Pancreas (tissue), 10 donors: ENCODE measurements at regions of chr1 and their contacts with region 1.

Region 1: DNA sequence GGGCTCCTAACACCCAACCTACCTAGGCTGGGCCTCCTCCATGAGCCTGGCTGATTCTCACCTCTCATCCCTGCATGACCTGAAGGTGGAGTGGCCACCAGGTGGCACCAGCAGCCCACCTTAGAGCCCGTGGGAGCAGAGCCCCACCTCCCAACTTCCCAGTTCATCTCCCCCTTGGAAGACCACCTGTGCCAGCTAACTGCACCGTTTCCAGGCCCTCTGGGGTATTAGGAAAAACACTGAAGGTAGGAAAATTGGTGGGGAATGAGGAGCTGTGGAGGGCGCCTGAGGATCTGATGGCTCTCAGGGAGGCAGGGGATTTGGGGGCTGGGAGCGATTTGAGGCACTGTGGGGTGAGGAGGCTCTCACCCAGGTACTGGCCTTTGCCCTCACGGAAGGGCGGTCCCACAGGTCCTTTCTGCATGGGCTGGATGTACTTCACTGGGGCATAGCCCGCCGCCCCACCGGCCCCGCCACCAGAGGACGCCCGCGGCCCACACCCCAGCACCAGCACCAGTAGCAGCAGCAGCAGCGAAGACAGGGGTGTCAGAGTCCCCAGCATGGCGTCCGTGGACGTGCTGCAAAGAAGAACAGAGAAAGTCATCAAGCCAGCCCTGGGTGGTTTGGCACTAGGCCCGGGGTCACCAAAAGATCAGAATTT is 11.1 kb downstream of the ADPRS start:
- DNase-seq: peak; percentile 61 to 91 (median 84)
- ATAC-seq: peak; percentile 81 to 96 (median 93)
- H3K4me3 ChIP-seq: no peak overlapping the region
- H3K27ac ChIP-seq: no peak overlapping the region
- H3K4me1 ChIP-seq: no peaks in the 10 kb centered on the region
- H3K27me3 ChIP-seq: no peaks in the 10 kb centered on the region
- CTCF ChIP-seq: peak; percentile 59 to 81 (median 76)

Region 2: GRCh38 chr1:36187800-36188593 is 88.2 kb after region 1 on chr1:
- intact Hi-C with region 1: loop called in 2 of 3 experiments (anchors 5 to 10 kb)
- DNase-seq: peak; percentile 77 to 91 (median 82)
- ATAC-seq: peak; percentile 96 to 99 (median 99)
- H3K4me3 ChIP-seq: no peak overlapping the region
- H3K27ac ChIP-seq: peak overlapping the region in 3 of 4 donors; percentile 44 to 59 (median 48)
- H3K4me1 ChIP-seq: no peaks in the 10 kb centered on the region
- H3K27me3 ChIP-seq: no peaks in the 10 kb centered on the region
- CTCF ChIP-seq: peak; percentile 66 to 86 (median 74)

Region 3: DNA sequence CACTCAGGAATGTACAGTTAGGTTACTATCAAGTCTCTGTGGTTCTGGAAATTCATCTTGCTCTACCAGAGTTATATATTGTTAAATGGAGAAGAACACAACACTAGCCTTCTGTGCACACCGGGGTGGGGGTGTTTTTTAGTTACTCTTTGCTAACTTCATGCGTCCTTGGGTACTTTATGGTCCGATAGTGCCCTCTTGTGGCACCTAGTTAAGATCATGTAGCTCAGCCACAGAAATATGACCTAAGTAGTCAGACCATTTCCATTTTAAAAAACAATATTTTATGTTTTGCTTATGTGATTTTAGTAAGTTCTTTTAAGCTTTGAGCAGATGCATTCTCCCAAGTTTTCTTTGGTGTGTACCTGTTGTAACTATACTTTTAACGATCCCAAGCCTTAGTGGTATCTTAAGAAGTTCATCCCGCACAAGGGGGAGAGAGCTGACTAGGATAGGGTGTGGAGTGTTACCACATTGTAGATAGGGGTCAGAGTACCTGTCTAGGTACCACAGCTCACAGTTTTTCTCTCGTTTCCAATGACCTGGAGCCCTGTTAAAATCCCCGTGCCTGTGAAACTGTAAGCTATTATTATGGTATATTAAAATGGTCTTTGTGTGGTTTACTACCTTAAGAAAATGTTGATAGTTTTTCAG is 185.8 kb after region 1 on chr1:
- intact Hi-C with region 1: loop called in 2 of 3 experiments (anchors 5 to 10 kb)
- DNase-seq: peak in 3 of 6 donors; percentile 60 to 68 (median 62)
- ATAC-seq: peak; percentile 87 to 95 (median 92)
- H3K4me3 ChIP-seq: no peak overlapping the region
- H3K27ac ChIP-seq: peak overlapping the region in 1 of 4 donors; percentile 25
- H3K4me1 ChIP-seq: no peaks in the 10 kb centered on the region
- H3K27me3 ChIP-seq: no peaks in the 10 kb centered on the region
- CTCF ChIP-seq: peak; percentile 44 to 64 (median 56)

Region 4: DNA sequence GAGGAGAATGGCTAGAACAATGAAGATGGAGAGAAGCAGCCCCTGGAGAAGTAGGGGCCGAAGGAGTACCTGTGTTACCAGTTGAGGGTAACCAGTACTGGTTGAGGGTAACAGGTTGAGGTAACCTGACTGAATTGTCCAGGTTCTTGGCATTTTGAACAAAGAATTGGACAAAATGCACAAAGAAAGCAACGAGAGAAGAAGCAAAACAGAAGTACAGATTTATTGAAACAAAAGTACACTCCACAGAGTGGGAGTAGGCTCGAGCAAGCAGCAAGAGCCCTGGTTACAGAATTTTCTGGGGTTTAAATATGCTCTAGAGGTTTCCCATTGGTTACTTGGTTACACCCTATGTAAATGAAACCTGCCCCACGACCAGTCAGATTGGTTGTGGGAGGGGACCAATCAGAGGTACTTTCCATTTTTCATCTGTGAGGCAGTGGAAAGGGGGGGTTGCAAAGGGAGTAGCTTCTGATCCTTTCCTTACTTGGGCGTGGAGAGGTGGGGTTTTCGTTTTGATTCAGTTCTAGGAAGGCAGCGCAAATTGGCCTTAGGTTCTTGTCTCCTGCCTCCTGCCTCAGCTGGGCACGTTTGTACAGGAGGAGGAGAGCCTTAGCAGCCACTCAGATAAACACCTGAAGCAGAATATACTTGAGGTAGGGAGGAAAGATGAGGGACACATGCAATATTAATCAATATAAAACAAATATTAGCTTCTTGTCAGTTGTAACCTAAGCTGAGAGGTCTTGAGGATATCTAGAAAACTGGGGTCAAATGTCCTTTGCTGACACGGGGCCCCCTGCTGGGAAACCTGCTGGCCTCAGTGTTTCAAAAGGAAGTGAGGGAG is 312.1 kb after region 1 on chr1:
- intact Hi-C with region 1: loop called in 1 of 3 experiments (anchors 10 kb)
- DNase-seq: no peak
- ATAC-seq: peak in 3 of 4 donors; percentile 55 to 81 (median 56)
- H3K4me3 ChIP-seq: no peak overlapping the region
- H3K27ac ChIP-seq: no peak overlapping the region
- H3K4me1 ChIP-seq: no peaks in the 10 kb centered on the region
- H3K27me3 ChIP-seq: no peaks in the 10 kb centered on the region
- CTCF ChIP-seq: no peak

Region 5: GRCh38 chr1:36420836-36421664 is 321.2 kb after region 1 on chr1:
- intact Hi-C with region 1: loop called in 2 of 3 experiments (anchors 10 kb)
- DNase-seq: peak; percentile 67 to 98 (median 87)
- ATAC-seq: peak; percentile 93 to 100 (median 98)
- H3K4me3 ChIP-seq: no peak overlapping the region
- H3K27ac ChIP-seq: no peak overlapping the region
- H3K4me1 ChIP-seq: peaks cover 0 to 5% (median 0%) of the 10 kb centered on the region in 3 donors
- H3K27me3 ChIP-seq: no peaks in the 10 kb centered on the region
- CTCF ChIP-seq: peak; percentile 81 to 89 (median 83)